Kidney (tissue), 22 donors: ENCODE measurements at regions of chr4 and their contacts with region 1.

Region 1: DNA sequence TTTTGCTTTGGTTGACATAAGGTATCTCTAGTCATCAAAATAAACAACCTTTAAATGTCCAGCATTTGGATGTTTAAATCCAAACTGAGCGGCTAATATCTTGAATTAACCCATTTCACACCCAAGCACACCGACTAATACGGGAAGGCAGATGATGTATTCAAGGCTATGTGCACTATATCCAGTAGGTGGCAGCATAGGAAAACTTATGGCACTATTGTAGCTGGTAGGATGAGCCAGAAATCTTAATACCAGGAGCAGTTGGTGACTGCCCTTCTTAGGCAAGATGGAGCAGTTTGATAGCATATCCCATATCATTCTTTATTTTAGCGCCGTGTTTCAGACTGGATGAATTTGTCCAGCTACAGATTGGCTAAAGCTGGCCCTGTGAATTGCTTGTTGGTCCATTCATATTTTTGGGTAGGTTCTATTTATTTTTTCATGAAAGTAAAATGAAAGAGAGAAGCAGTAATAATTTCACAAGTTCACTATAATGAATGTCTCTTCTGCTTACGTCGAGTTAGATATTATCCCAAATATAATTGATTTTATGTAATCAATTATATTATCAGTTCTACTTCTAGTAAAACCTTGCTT is 24.4 kb downstream of the UCHL1 start:
- DNase-seq: peak in 4 of 5 donors; percentile 58 to 93 (median 75)
- H3K4me3 ChIP-seq: no peak overlapping the region
- H3K27ac ChIP-seq: no peak overlapping the region
- H3K4me1 ChIP-seq: no peaks in the 10 kb centered on the region
- H3K27me3 ChIP-seq: no peaks in the 10 kb centered on the region
- CTCF ChIP-seq: peak; percentile 95

Region 2: DNA sequence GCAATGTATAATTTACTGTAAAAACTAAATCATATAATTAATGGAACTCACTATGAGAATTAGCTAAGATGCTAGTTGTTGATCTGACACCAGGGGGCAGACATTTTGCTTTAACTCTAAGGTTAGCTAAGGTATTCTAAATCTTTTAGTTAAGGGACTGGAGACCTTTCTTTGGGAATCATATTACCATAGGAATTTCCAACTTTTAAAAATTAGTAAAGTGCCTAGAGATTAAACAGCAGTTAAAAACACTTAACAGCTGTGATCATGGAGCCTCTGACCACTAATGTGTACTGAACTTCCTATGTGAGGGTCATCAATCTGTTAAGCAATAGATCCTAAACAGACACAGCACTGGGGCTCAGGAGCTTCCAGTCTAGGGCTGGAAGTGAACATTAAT is 304.8 kb before region 1 on chr4:
- intact Hi-C with region 1: no loop called
- DNase-seq: peak in 3 of 5 donors; percentile 32 to 85 (median 83)
- H3K4me3 ChIP-seq: no peak overlapping the region
- H3K27ac ChIP-seq: no peak overlapping the region
- H3K4me1 ChIP-seq: no peaks in the 10 kb centered on the region
- H3K27me3 ChIP-seq: no peaks in the 10 kb centered on the region
- CTCF ChIP-seq: peak; percentile 66

Region 3: GRCh38 chr4:41661442-41662076 is 380.4 kb after region 1 on chr4:
- intact Hi-C with region 1: loop called (anchors 2 kb)
- DNase-seq: peak in 4 of 5 donors; percentile 68 to 80 (median 70)
- H3K4me3 ChIP-seq: no peak overlapping the region
- H3K27ac ChIP-seq: no peak overlapping the region
- H3K4me1 ChIP-seq: peaks cover 0 to 4% (median 4%) of the 10 kb centered on the region in 3 donors
- H3K27me3 ChIP-seq: no peaks in the 10 kb centered on the region
- CTCF ChIP-seq: peak; percentile 90

Region 4: GRCh38 chr4:41882625-41883347 is 601.6 kb after region 1 on chr4:
- intact Hi-C with region 1: loop called (anchors 10 kb)
- DNase-seq: peak in 4 of 5 donors; percentile 42 to 66 (median 60)
- H3K4me3 ChIP-seq: peak overlapping the region in 2 of 3 donors; percentile 39 to 52
- H3K27ac ChIP-seq: no peak overlapping the region
- H3K4me1 ChIP-seq: peaks cover 0 to 17% (median 0%) of the 10 kb centered on the region in 3 donors
- H3K27me3 ChIP-seq: peaks cover 38% of the 10 kb centered on the region
- CTCF ChIP-seq: peak; percentile 75